ENCODE measurements at regions of chr7 and their contacts with region 1.

Region 1: DNA sequence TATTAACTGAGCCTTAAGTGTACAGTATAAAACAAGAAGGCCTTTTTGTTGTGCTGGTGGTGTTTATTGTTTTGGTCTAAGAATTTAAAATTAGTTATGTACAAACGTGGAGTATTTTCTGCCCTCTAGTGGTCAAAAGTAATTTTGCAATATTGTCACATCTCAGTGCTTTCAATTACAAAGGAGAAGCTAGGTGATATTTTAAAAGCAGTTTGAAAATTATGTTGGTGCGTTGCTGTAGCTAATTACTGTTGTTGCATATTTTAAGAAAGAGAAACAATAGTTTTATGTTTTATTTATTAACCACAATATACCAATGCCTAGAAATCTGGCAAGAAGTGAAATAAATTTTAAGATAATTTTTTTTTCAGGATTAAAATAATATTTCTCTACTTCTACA is 11.4 kb downstream of the NPVF start:
- DNase-seq: peak; percentile 48
- H3K4me3 ChIP-seq: no peak overlapping the region; a peak in 1 of 4 replicates
- H3K27ac ChIP-seq: no peak overlapping the region
- H3K4me1 ChIP-seq: peaks cover 0 to 2% of the 10 kb centered on the region in 2 experiments; a peak in 1 of 4 replicates
- H3K27me3 ChIP-seq: peaks cover 8% of the 10 kb centered on the region; the same call in 1 of the 2 replicates
- CTCF ChIP-seq: peak; percentile 99
- EP300 ChIP-seq: no peak
- RAD21 ChIP-seq: peak; percentile 49; the same call in 1 of the 2 replicates

Region 2: GRCh38 chr7:24979863-24980533 is 236.8 kb before region 1 on chr7 and contains the start of gene OSBPL3:
- CTCF ChIA-PET with region 1: no interaction called
- POLR2A ChIA-PET with region 1: no interaction called
- DNase-seq: peak; percentile 100
- H3K4me3 ChIP-seq: peak within 1 kb of the TSS; percentile 73 to 97
- H3K27ac ChIP-seq: peak within 1 kb of the TSS; percentile 84 to 87
- H3K4me1 ChIP-seq: peaks cover 21 to 28% of the 10 kb centered on the region in 2 experiments; a peak in 3 of 4 replicates
- H3K27me3 ChIP-seq: no peaks in the 10 kb centered on the region
- CTCF ChIP-seq: no peak
- EP300 ChIP-seq: peak in 1 of 2 experiments; percentile 2; a peak in 1 of 4 replicates
- RAD21 ChIP-seq: peak; percentile 38
- polyA plus RNA-seq, gene OSBPL3: 22.6 and 23.2 TPM in 2 replicates

Region 3: GRCh38 chr7:24991353-24991752 is 225.5 kb before region 1 on chr7:
- CTCF ChIA-PET with region 1: no interaction called
- POLR2A ChIA-PET with region 1: no interaction called
- DNase-seq: no peak
- H3K4me3 ChIP-seq: no peak overlapping the region
- H3K27ac ChIP-seq: no peak overlapping the region
- H3K4me1 ChIP-seq: no peaks in the 10 kb centered on the region; a peak in 1 of 4 replicates
- H3K27me3 ChIP-seq: no peaks in the 10 kb centered on the region
- CTCF ChIP-seq: no peak
- EP300 ChIP-seq: no peak
- RAD21 ChIP-seq: no peak

Region 4: DNA sequence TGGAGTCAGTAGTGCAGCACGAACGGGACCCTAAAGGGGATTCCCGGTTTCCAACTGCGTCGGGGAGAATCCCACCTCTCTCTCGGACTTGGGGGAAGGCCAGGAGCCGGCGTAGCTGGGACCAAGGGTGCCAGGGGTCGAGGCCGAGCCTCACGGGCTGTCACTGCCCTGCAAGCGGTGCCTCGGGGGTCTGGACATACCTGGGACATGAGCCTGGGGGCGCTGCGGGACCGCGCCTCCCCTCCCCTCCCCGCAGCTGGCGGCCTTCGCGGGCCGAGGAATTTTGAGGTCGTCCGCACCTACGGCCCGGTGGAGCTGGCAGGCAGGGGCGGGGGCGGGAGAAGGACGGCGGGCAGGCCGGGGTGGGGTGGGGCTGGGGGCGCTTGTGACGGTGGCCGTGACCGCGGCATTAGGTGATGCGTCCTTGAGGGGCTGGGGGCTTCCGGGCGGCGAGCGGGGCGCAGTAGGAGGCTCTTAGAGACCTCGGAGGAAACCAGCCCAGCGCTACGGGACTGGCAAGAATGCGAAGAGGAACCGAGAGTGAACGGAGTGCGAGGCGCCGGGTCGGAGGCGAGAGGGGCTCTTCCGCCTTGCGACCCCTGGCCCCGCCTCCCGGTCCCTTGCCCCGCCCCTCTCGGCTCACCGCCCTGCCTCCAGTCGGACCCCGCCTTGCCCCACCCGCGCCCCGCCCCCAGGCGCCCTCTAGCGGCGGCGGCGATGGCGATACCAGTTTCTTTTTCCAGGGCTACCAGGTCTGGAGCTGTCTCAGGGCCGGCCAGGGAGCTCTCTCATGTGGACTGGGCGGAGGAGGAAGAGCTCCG is 36.9 kb before region 1 on chr7:
- CTCF ChIA-PET with region 1: interaction called, 17 read pairs
- POLR2A ChIA-PET with region 1: interaction called, 3 read pairs
- DNase-seq: peak; percentile 100
- H3K4me3 ChIP-seq: peak overlapping the region; percentile 67
- H3K27ac ChIP-seq: peak overlapping the region in 1 of 2 experiments; percentile 67; a peak in 1 of 4 replicates
- H3K4me1 ChIP-seq: peaks cover 0 to 10% of the 10 kb centered on the region in 2 experiments; a peak in 2 of 4 replicates
- H3K27me3 ChIP-seq: no peaks in the 10 kb centered on the region
- CTCF ChIP-seq: peak; percentile 90
- EP300 ChIP-seq: no peak; a peak in 1 of 4 replicates
- RAD21 ChIP-seq: peak; percentile 13; the same call in 1 of the 2 replicates

Region 5: GRCh38 chr7:25196132-25196891 is 20.5 kb before region 1 on chr7:
- CTCF ChIA-PET with region 1: interaction called, 15 read pairs
- POLR2A ChIA-PET with region 1: no interaction called
- DNase-seq: no peak
- H3K4me3 ChIP-seq: no peak overlapping the region
- H3K27ac ChIP-seq: no peak overlapping the region
- H3K4me1 ChIP-seq: no peaks in the 10 kb centered on the region
- H3K27me3 ChIP-seq: 0 out of 2 replicates have a peak, but pooled peaks cover 11% of the 10 kb centered on the region
- CTCF ChIP-seq: no peak
- EP300 ChIP-seq: no peak
- RAD21 ChIP-seq: no peak

Region 6: DNA sequence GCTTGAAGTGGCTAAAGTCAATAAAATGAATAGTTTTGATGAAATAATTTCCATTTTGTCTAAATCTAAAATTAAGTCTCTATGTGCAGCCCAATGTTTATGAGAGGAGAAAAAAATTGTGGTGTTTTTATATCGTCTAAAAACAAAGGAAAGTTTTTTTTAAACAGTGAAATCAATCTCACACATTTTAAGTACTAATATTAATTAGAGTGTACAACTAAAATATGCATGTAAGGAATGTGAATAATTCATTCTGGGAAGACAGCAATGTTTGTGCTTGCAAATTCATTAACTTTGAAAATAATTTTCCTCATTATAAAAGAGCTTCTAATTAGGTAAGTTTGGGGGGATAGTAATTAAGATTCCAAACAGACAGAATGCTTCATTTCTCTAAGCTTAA is 11.5 kb after region 1 on chr7 and contains the start of gene NPVF:
- CTCF ChIA-PET with region 1: interaction called, 36 read pairs
- POLR2A ChIA-PET with region 1: no interaction called
- DNase-seq: no peak
- H3K4me3 ChIP-seq: no peak within 1 kb of the TSS
- H3K27ac ChIP-seq: no peak within 1 kb of the TSS
- H3K4me1 ChIP-seq: no peaks in the 10 kb centered on the region
- H3K27me3 ChIP-seq: peaks cover 7% of the 10 kb centered on the region; the same call in 1 of the 2 replicates
- CTCF ChIP-seq: no peak
- EP300 ChIP-seq: no peak
- RAD21 ChIP-seq: no peak
- polyA plus RNA-seq, gene NPVF: not detected in 2 replicates

Region 7: DNA sequence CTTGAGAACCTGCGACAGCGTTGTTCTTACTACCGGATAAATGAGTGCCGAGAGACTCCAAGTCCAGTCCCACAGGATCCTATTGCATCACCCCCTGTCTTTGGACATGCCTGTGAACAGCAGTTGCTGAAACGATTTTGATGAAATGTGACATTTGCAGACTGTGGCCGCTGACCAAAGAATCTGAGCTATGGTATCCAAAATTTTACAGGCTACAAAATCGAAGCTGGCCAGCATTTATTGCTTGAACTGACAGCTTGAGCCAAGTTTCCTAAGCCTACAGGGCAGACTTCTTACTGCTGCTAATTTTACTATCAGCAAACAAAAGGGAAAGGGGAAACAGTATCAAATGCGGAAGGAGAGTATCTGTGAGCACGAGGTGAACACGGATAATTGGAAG is 23.5 kb after region 1 on chr7:
- CTCF ChIA-PET with region 1: interaction called, 22 read pairs
- POLR2A ChIA-PET with region 1: no interaction called
- DNase-seq: no peak
- H3K4me3 ChIP-seq: no peak overlapping the region
- H3K27ac ChIP-seq: no peak overlapping the region
- H3K4me1 ChIP-seq: no peaks in the 10 kb centered on the region
- H3K27me3 ChIP-seq: no peaks in the 10 kb centered on the region; the same call in 1 of the 2 replicates
- CTCF ChIP-seq: no peak
- EP300 ChIP-seq: no peak
- RAD21 ChIP-seq: no peak

Region 8: DNA sequence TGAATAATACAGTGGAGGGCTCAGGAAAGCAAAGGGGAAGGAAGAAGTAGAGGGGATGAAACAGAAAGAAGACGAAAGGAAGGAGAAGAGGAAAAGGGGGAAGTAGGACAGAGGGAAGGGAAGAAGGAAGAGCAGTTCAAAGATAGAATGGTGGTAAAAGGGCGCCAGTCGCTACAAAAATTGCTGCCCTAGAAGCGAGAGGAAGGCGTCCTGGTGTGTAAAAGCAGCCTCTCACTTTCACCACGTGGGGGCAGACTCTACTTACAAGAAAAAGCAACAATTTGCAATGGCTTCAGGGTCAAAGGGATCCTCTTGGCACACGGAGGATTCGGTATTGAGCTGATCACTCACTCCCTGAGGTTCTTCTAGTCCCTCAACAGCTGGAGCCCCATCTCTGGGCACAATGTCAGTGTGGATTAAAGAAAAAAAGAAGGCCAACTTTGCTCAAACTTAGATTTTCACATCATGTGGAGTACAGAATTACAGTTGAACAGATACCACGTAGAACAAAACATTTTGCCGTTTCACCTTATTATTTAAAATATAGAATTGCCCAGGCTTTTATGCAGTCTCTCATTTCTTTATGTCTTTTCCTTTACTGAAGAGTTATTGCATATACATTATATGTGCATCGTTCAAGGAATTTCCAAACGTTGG is 42.9 kb after region 1 on chr7:
- CTCF ChIA-PET with region 1: interaction called, 10 read pairs
- POLR2A ChIA-PET with region 1: no interaction called
- DNase-seq: peak; percentile 79
- H3K4me3 ChIP-seq: peak overlapping the region in 1 of 2 experiments; percentile 15; a peak in 1 of 4 replicates
- H3K27ac ChIP-seq: no peak overlapping the region
- H3K4me1 ChIP-seq: peaks cover 0 to 4% of the 10 kb centered on the region in 2 experiments; a peak in 2 of 4 replicates
- H3K27me3 ChIP-seq: peaks cover 10% of the 10 kb centered on the region; the same call in 1 of the 2 replicates
- CTCF ChIP-seq: peak; percentile 94
- EP300 ChIP-seq: no peak
- RAD21 ChIP-seq: peak; percentile 99

Region 9: GRCh38 chr7:26686448-26686981 is 1469.7 kb after region 1 on chr7:
- CTCF ChIA-PET with region 1: no interaction called
- POLR2A ChIA-PET with region 1: no interaction called
- DNase-seq: peak; percentile 17
- H3K4me3 ChIP-seq: no peak overlapping the region; a peak in 1 of 4 replicates
- H3K27ac ChIP-seq: no peak overlapping the region
- H3K4me1 ChIP-seq: peaks cover 0 to 5% of the 10 kb centered on the region in 2 experiments; a peak in 2 of 4 replicates
- H3K27me3 ChIP-seq: peaks cover 9% of the 10 kb centered on the region
- CTCF ChIP-seq: peak; percentile 98
- EP300 ChIP-seq: no peak
- RAD21 ChIP-seq: peak; percentile 83